ENCODE measurements at regions of chr9 and their contacts with region 1.

Region 1: DNA sequence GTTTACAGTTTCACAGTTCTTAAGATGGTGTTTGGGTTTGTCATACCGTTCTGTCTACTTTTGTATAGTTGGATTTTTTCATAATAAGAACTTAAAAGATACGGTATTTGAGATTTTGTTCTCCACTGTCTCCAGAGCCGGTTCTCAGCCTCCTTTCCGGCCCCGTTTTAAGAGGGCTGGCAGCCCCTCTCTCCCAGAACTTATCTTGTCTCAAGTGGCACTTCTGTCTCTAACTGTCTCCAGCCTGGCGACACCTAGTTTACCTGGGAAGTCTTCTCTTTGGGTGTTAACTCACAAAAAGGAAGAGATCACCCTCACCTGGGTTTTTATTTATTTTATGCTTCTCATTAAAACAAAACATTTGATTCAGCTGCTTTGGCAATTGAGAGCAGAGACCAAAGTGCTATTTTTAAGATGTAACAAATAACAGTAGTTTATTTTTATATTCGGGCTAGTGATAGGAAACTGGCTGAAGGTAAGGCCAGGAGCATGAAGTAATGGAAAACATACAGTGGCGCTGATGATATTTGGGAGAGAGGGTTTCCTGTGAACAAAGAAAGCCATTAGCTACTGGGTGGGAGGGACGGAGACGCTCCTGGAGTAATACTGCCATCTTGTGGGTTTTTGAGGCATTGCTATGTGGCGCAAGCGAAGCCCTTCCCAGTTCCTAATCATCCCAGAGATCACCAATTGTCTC is 48.3 kb downstream of the ACER2 start:
- DNase-seq: peak; percentile 91
- H3K4me3 Mint-ChIP-seq: peak overlapping the region; percentile 59
- H3K27ac Mint-ChIP-seq: no peak overlapping the region
- H3K4me1 Mint-ChIP-seq: peaks cover 10% of the 10 kb centered on the region
- H3K27me3 Mint-ChIP-seq: peaks cover 3% of the 10 kb centered on the region

Region 2: GRCh38 chr9:17810728-17811571 is 1646.2 kb before region 1 on chr9:
- intact Hi-C with region 1: loop called (anchors 10 kb)
- DNase-seq: peak; percentile 80
- H3K4me3 Mint-ChIP-seq: no peak overlapping the region
- H3K27ac Mint-ChIP-seq: no peak overlapping the region
- H3K4me1 Mint-ChIP-seq: no peaks in the 10 kb centered on the region
- H3K27me3 Mint-ChIP-seq: no peaks in the 10 kb centered on the region

Region 3: DNA sequence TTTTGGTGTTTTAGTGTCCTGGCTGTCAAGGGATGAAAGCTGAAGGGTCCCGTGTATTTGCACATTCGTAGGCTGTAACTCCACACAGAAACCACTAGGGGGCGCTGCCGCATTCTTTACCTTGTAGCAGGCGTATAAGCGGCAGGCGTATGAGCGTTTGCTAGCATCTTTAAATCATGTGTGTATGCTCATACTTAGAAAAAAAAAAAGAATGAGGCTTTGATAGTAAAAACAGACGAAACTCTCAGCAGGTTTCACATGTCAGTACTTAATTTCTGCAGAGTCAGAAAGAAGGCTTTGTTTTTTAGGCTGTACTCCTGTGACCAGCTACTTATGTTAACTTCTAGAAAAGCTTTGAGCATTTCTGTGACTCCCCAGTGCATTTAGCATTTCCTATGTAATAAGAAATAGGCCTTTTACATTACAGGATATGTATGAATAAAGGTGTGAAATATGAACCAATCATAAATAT is 1202.0 kb before region 1 on chr9:
- intact Hi-C with region 1: loop called (anchors 5 kb)
- DNase-seq: peak; percentile 90
- H3K4me3 Mint-ChIP-seq: no peak overlapping the region
- H3K27ac Mint-ChIP-seq: no peak overlapping the region
- H3K4me1 Mint-ChIP-seq: no peaks in the 10 kb centered on the region
- H3K27me3 Mint-ChIP-seq: peaks cover 7% of the 10 kb centered on the region

Region 4: GRCh38 chr9:19048966-19049916 is 407.9 kb before region 1 on chr9 and contains the start of gene RRAGA:
- intact Hi-C with region 1: loop called (anchors 1 kb)
- DNase-seq: peak; percentile 99
- H3K4me3 Mint-ChIP-seq: peak within 1 kb of the TSS; percentile 95
- H3K27ac Mint-ChIP-seq: peak within 1 kb of the TSS; percentile 99
- H3K4me1 Mint-ChIP-seq: peaks cover 32% of the 10 kb centered on the region
- H3K27me3 Mint-ChIP-seq: no peaks in the 10 kb centered on the region
- total RNA-seq, gene RRAGA: 54.1 and 54.3 TPM in 2 replicates

Region 5: DNA sequence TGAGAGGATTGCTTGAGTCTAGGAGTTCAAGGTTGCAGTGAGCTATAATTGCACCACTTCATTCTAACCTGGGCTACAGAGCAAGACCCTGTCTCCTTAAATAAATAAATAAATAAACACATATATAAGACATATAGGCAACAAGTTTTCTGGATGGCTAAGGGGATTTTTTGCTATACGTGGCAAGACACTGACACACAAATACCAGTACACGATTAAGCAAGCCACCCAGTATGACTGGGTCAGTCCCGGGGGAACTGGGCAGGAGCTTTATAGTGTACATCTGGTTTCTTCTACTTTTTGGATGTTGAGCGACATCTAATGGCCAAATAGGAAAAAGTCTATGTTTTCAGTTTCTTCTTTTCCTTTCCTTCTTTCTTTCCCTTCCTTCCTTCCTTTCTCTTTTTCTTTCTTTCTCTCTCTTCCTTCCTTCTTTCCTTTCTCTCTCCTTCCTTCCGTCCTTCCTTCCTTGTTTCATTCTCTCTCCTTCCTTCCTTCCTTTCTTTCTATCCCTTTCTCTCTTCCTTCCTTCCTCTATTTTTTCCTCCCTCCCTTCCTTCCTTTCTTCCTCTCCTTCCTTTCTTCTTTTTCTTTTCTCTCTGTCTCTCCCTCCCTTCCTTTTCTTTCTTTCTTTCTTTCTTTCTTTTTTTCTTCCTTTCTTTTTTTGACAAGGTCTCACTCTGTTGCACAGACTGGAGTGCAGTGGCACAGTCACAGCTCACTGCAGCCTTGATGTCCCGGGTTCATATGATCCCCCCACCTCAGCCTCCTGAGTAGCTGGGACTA is 282.8 kb before region 1 on chr9:
- intact Hi-C with region 1: loop called (anchors 2 kb)
- DNase-seq: peak; percentile 80
- H3K4me3 Mint-ChIP-seq: peak overlapping the region; percentile 22
- H3K27ac Mint-ChIP-seq: peak overlapping the region; percentile 34
- H3K4me1 Mint-ChIP-seq: peaks cover 21% of the 10 kb centered on the region
- H3K27me3 Mint-ChIP-seq: no peaks in the 10 kb centered on the region

Region 6: GRCh38 chr9:19379697-19380046 is 77.5 kb before region 1 on chr9:
- intact Hi-C with region 1: loop called (anchors 1 kb)
- DNase-seq: no peak
- H3K4me3 Mint-ChIP-seq: peak overlapping the region; percentile 95
- H3K27ac Mint-ChIP-seq: peak overlapping the region; percentile 95
- H3K4me1 Mint-ChIP-seq: peaks cover 45% of the 10 kb centered on the region
- H3K27me3 Mint-ChIP-seq: no peaks in the 10 kb centered on the region

Region 7: GRCh38 chr9:19408693-19409400 is 48.3 kb before region 1 on chr9 and contains the start of gene ACER2:
- intact Hi-C with region 1: loop called (anchors 1 kb)
- DNase-seq: peak; percentile 99
- H3K4me3 Mint-ChIP-seq: peak within 1 kb of the TSS; percentile 93
- H3K27ac Mint-ChIP-seq: peak within 1 kb of the TSS; percentile 81
- H3K4me1 Mint-ChIP-seq: peaks cover 12% of the 10 kb centered on the region
- H3K27me3 Mint-ChIP-seq: peaks cover 4% of the 10 kb centered on the region
- total RNA-seq, gene ACER2: 0.96 and 1.3 TPM in 2 replicates